ENCODE measurements at regions of chr13 and their contacts with region 1.

Region 1: DNA sequence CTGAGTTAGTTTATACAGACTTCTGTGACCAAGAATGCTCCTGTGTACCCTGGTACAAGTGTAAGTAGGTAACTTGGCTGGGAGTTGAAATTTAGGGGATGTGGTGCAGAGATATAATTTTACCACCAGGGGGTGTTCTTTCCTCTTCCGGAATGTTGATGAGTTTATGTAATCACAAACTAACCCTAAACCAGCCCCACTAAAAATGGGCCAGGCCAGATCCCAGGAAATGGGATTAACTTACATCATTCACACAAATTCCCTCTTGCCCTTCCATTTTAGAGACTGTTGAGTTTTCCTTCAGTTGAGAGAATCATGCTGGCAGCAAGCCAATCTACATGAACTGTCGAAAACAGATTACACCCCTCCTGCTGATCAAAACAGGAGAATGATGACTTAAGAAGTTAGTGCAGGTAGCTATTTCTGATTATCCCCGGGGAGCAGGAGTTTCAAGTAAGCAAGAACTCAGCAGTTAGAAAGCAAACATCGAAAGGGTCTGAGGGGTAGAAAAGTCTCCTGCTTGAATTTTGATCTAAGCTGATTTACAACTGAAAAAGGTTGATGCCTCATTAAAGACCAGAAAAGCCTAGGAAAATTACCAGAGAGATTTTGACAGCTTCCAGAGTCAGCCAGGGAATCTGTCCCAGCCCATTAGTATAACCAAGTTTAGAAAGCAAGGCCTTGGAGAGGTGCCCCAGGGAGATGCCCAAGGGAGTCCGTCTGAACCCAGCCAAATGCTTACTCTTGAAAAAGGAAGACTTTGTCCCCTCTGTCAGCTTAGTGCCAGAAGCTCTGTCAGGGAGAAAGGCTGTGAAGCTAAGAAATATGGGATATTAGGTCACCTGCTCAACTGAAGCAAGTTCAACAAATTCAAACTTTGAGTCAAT is 32.3 kb upstream of the MED4 start:
- DNase-seq: peak; percentile 93
- H3K4me3 ChIP-seq: peak overlapping the region; percentile 7
- H3K27ac ChIP-seq: peak overlapping the region; percentile 67
- H3K4me1 ChIP-seq: peaks cover 10% of the 10 kb centered on the region
- H3K27me3 ChIP-seq: no peaks in the 10 kb centered on the region
- CTCF ChIP-seq: peak; percentile 82

Region 2: DNA sequence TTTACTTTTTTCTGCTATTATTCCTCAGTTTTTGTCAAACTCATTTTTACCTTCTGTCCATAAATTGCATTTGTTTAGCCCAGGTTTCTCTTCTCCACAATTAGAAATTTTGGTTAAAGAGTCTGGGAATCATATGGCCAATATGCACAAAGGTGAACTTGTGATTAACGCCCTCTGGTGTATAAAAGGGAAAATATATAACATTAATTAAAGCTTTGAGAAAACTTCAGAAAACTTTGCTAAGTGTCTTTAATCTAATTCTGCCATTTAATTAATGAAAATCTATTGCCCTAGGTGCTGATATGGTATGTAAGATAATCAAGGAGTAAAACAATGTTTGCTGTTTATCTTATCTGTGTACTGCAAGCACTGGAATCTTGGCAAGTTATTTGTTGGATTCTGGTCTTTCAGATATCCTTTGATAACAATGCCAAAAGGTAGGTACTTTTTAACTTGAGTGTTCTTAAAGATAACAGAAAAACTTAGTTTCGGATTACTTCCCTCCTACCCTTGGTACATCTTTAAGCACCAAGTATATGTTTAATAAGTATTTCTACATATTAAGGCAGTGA is 528.8 kb before region 1 on chr13:
- CTCF ChIA-PET with region 1: no interaction called
- POLR2A ChIA-PET with region 1: no interaction called
- intact Hi-C with region 1: no loop called
- DNase-seq: peak; percentile 19
- H3K4me3 ChIP-seq: no peak overlapping the region
- H3K27ac ChIP-seq: no peak overlapping the region
- H3K4me1 ChIP-seq: no peaks in the 10 kb centered on the region
- H3K27me3 ChIP-seq: peaks cover 18% of the 10 kb centered on the region
- CTCF ChIP-seq: peak; percentile 51; the same call in 1 of the 2 replicates

Region 3: DNA sequence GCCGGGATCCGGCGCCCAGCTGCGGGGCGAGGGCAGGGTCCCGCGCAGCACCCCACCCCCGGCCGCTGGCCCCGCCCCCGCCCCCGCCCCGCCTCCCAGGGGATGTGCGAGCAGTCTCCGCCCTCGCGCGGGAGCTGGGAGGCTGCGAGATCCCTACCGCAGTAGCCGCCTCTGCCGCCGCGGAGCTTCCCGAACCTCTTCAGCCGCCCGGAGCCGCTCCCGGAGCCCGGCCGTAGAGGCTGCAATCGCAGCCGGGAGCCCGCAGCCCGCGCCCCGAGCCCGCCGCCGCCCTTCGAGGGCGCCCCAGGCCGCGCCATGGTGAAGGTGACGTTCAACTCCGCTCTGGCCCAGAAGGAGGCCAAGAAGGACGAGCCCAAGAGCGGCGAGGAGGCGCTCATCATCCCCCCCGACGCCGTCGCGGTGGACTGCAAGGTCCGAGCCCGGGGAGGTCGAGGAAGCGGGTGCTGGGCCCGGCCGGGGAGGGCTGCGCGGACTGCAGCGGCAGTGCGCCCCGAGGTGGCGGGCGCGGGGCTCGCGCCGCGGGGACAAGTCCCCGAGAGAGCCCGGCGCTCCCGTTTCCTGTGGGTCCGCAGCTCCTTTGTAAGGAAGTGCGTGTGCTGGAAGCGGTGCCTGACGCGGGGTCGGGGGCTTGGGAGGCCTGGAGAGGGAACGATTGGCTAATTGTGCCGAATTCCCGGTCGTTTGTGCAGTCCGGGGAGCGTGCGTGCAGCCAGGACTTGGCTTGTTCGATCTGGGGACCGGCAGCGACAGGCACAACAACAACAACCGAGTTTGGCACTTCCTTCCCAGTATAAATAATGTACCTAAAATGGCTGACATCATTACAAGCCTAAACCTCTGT is 106.1 kb after region 1 on chr13 and contains the start of gene ITM2B:
- CTCF ChIA-PET with region 1: no interaction called
- POLR2A ChIA-PET with region 1: interaction called, 5 read pairs
- intact Hi-C with region 1: loop called (anchors 5 kb)
- DNase-seq: peak; percentile 83
- H3K4me3 ChIP-seq: peak within 1 kb of the TSS; percentile 98
- H3K27ac ChIP-seq: peak within 1 kb of the TSS; percentile 97
- H3K4me1 ChIP-seq: peaks cover 31% of the 10 kb centered on the region
- H3K27me3 ChIP-seq: no peaks in the 10 kb centered on the region
- CTCF ChIP-seq: peak; percentile 44; the same call in 1 of the 2 replicates
- total RNA-seq, gene ITM2B: 168 and 190 TPM in 2 replicates

Region 4: GRCh38 chr13:48962281-48962680 is 835.1 kb after region 1 on chr13:
- CTCF ChIA-PET with region 1: no interaction called
- POLR2A ChIA-PET with region 1: no interaction called
- intact Hi-C with region 1: no loop called
- DNase-seq: no peak
- H3K4me3 ChIP-seq: no peak overlapping the region
- H3K27ac ChIP-seq: no peak overlapping the region
- H3K4me1 ChIP-seq: no peaks in the 10 kb centered on the region
- H3K27me3 ChIP-seq: no peaks in the 10 kb centered on the region
- CTCF ChIP-seq: no peak

Measured in A673 (cell line).